Activated CD8-positive, alpha-beta T cell treated with anti-CD3 and anti-CD28 coated beads for 36 hours (primary cell): ENCODE measurements at regions of chr12 and their contacts with region 1.

Region 1: DNA sequence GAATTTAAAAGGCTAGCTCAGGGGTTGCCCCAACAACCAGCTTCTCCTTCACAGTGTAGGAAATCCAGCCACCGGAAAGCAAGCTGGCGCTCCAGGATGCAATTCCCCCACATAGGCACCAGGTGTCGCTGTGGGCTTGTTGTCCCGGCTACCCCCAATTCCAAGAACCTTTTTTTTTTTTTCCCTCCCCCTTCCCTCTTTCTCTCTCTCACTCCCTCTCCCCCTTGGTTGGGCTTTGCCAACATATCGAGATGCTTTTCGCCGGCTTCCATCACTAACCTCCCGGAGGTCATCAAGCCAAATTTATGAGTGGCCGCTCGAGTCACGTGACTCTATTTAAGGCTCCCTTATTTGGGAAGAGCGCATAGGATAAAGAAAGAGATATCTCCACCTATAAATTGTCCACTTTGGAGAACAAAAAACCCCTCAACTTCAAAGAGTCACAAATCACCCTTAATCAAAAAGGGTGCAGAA is at the start of gene HOXC5:
- DNase-seq: peak; percentile 78
- ATAC-seq: peak; percentile 57
- H3K4me3 Mint-ChIP-seq: peak within 1 kb of the TSS; percentile 32
- H3K27ac Mint-ChIP-seq: no peak within 1 kb of the TSS
- H3K4me1 Mint-ChIP-seq: peaks cover 18% of the 10 kb centered on the region
- H3K27me3 Mint-ChIP-seq: peaks cover 66% of the 10 kb centered on the region
- CTCF ChIP-seq: peak; percentile 97
- total RNA-seq, gene HOXC5: not detected

Region 2: GRCh38 chr12:53811606-53812005 is 221.1 kb before region 1 on chr12:
- CTCF ChIA-PET with region 1: no interaction called
- POLR2A ChIA-PET with region 1: no interaction called
- intact Hi-C with region 1: no loop called
- DNase-seq: no peak
- ATAC-seq: no peak
- H3K4me3 Mint-ChIP-seq: no peak overlapping the region
- H3K27ac Mint-ChIP-seq: no peak overlapping the region
- H3K4me1 Mint-ChIP-seq: no peaks in the 10 kb centered on the region
- H3K27me3 Mint-ChIP-seq: peaks cover 16% of the 10 kb centered on the region
- CTCF ChIP-seq: no peak

Region 3: DNA sequence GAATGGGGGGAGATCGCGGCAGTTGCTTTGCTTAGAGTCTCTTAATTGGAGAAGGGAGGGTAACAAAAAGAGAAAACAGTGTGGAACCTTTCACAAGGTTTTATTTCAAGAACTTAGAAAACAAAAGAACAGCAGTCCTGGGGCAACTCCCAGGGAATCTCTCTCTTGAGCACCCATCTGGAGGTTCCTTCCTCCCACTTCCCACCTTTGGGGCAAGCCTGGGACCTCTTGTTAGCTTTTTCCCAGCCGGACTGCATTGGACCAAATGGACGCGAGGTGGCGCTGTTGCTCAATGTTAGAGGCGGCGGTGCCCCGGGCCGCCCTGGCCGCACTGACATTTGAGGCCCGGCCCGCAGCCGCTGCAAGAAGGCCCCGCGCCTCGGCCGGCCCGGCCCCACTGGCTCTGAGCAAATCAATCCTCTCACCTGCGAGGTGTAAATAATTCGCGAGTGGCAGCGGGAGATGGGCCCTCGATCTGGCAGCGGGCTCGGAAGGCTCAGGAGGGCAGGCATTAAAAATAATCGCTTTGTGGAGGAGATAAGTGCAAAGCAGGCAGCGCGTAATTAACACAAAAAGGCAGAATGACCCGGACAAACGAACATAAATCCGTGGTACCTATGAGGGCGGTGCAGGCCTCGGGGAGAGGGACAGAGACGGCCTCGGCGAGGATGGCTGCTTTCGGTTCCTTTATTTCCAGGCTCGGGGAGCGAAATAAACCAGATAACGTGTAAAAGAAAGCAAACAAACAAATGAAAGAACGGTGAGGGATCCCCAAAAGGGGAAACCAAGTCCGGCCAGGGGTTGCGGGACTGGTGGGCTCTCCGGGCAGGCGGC is 26.6 kb before region 1 on chr12:
- CTCF ChIA-PET with region 1: interaction called, 37 read pairs
- POLR2A ChIA-PET with region 1: interaction called, 3 read pairs
- intact Hi-C with region 1: no loop called
- DNase-seq: peak; percentile 90
- ATAC-seq: peak; percentile 83
- H3K4me3 Mint-ChIP-seq: peak overlapping the region; percentile 41
- H3K27ac Mint-ChIP-seq: no peak overlapping the region
- H3K4me1 Mint-ChIP-seq: peaks cover 20% of the 10 kb centered on the region
- H3K27me3 Mint-ChIP-seq: peaks cover 84% of the 10 kb centered on the region
- CTCF ChIP-seq: peak; percentile 94

Region 4: DNA sequence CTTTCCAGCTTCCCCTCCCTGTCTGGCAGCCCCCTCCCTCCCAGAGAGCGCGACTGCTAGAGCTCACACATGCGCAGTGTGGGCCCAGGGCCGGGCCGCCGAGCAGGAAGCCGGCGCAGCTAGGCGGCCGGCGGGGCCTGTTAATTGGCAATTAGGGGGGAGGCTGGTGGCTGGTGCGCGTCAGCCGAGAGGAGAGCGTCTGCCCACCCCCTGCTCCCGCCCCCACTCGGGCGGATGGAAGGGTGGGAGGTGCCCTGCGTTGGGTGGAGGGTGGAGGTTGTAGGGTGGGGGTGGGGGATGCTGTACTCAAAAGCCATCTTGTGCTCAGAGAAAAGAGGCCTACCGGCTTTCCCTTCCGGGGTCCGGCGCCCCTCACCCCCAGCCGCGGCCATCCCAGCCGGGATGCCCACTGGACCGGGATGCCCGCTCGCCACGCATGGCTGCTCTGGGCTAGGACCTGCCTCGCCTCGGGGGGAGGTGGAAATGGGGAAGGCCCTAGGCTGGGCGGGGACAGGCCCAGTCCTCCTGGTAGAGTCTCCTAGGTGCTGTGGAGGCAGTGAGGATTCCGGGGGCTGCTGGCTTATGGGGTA is 14.7 kb before region 1 on chr12:
- CTCF ChIA-PET with region 1: interaction called, 30 read pairs
- POLR2A ChIA-PET with region 1: no interaction called
- intact Hi-C with region 1: no loop called
- DNase-seq: peak; percentile 84
- ATAC-seq: peak; percentile 92
- H3K4me3 Mint-ChIP-seq: peak overlapping the region; percentile 76
- H3K27ac Mint-ChIP-seq: no peak overlapping the region
- H3K4me1 Mint-ChIP-seq: peaks cover 15% of the 10 kb centered on the region
- H3K27me3 Mint-ChIP-seq: peaks cover 67% of the 10 kb centered on the region
- CTCF ChIP-seq: no peak

Region 5: DNA sequence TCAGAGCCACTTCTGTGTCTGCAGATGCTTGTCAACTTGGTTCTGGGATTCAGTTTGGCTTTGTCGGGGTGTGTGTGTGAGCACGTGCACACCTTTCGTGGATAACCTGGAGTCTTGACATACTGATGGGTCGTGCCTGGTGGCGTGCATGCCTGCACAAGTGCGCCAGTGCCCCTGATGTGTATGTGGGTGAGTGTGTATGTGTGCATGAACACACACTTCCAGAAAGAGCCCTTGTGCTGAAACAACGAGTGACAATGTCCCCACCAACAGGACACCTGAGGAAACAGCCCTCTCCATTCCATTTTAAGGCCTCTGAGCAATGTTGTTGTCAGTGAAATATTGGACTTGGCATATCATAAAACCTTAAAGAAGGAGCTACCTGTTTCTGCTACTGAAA is 102.2 kb after region 1 on chr12:
- CTCF ChIA-PET with region 1: interaction called, 23 read pairs
- POLR2A ChIA-PET with region 1: no interaction called
- intact Hi-C with region 1: no loop called
- DNase-seq: no peak
- ATAC-seq: no peak
- H3K4me3 Mint-ChIP-seq: no peak overlapping the region
- H3K27ac Mint-ChIP-seq: no peak overlapping the region
- H3K4me1 Mint-ChIP-seq: no peaks in the 10 kb centered on the region
- H3K27me3 Mint-ChIP-seq: peaks cover 6% of the 10 kb centered on the region
- CTCF ChIP-seq: no peak

Region 6: DNA sequence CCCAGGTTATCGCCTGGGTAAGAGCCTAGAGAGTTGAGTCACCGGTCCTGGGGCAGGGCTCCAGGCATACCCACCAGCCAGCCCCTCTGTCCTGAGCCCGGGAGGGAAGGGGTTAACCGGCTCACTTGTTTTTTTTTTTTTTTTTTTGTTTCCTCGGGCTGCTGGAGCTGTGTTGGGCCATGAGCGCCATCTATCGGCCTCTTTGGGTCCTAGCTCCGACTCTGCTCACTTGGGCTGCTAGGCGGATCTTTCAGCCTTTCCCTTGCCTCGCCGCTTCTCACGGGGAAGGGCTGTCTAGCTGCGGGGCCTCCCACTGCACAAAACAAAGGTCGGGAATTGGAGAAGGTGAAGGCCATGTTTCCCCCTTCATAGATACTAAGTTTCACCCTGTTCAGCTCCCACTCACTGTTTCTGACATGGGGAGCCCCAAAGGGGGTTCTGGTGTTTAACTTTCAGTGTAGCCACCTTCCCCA is 158.9 kb after region 1 on chr12:
- CTCF ChIA-PET with region 1: interaction called, 140 read pairs
- POLR2A ChIA-PET with region 1: no interaction called
- intact Hi-C with region 1: loop called (anchors 2 kb)
- DNase-seq: peak; percentile 87
- ATAC-seq: peak; percentile 60
- H3K4me3 Mint-ChIP-seq: no peak overlapping the region
- H3K27ac Mint-ChIP-seq: no peak overlapping the region
- H3K4me1 Mint-ChIP-seq: peaks cover 18% of the 10 kb centered on the region
- H3K27me3 Mint-ChIP-seq: peaks cover 38% of the 10 kb centered on the region
- CTCF ChIP-seq: peak; percentile 74

Region 7: GRCh38 chr12:54207484-54208294 is 175.0 kb after region 1 on chr12:
- CTCF ChIA-PET with region 1: interaction called, 67 read pairs
- POLR2A ChIA-PET with region 1: no interaction called
- intact Hi-C with region 1: no loop called
- DNase-seq: peak; percentile 90
- ATAC-seq: peak; percentile 96
- H3K4me3 Mint-ChIP-seq: no peak overlapping the region
- H3K27ac Mint-ChIP-seq: no peak overlapping the region
- H3K4me1 Mint-ChIP-seq: no peaks in the 10 kb centered on the region
- H3K27me3 Mint-ChIP-seq: peaks cover 15% of the 10 kb centered on the region
- CTCF ChIP-seq: peak; percentile 92